ENCODE measurements at regions of chr11 and their contacts with region 1.

Region 1: GRCh38 chr11:108135845-108136544 is 14.6 kb downstream of the ACAT1 start:
- DNase-seq: no peak
- H3K4me3 Mint-ChIP-seq: no peak overlapping the region
- H3K27ac Mint-ChIP-seq: peak overlapping the region; percentile 79
- H3K4me1 Mint-ChIP-seq: peaks cover 20% of the 10 kb centered on the region
- H3K27me3 Mint-ChIP-seq: no peaks in the 10 kb centered on the region

Region 2: GRCh38 chr11:108115500-108116140 is 20.4 kb before region 1 on chr11:
- intact Hi-C with region 1: no loop called
- DNase-seq: no peak
- H3K4me3 Mint-ChIP-seq: no peak overlapping the region
- H3K27ac Mint-ChIP-seq: no peak overlapping the region
- H3K4me1 Mint-ChIP-seq: peaks cover 3% of the 10 kb centered on the region
- H3K27me3 Mint-ChIP-seq: no peaks in the 10 kb centered on the region

Region 3: DNA sequence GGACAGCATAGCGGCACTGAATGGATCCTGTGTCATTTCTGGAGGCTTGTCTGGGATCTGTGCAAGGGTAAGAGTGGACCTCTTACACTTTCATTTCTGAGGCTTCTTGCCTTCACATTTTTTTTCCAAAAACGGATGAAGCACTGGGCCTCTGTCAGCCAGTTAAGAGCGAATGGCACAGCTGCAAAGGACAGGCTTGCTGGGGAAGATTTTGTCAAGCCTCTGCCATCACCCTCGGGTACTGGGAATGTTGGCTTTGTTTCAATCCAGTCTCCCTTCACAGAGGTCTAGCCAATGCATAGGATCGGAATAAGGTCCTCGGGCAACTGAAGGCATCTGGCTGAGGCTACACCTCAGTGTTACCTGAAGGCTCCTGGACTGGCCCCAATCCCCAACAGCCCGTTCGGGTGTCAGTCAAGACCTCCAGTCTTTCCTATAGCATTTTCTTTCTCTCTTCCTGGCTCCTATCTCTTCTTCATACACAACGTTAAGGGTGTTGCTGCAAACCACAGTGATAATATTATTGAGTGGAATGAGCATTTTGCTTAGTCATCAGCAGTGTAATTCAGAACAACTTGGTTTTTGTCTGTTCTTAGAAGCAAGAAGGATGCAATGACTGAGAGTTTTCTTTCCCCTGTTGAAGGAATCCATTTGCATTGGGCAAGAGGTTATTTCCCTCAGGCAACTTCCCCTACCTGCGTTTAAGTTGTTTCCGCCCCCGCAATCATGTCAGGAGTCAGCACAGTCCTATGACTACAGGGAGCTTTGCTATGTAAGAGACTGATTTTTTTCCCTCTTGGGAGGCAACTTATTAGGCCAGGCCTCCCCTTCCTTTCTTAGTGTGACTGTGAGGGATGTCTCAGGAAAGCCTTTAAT is 63.7 kb after region 1 on chr11:
- intact Hi-C with region 1: loop called (anchors 5 kb)
- DNase-seq: no peak
- H3K4me3 Mint-ChIP-seq: no peak overlapping the region
- H3K27ac Mint-ChIP-seq: peak overlapping the region; percentile 73
- H3K4me1 Mint-ChIP-seq: peaks cover 42% of the 10 kb centered on the region
- H3K27me3 Mint-ChIP-seq: no peaks in the 10 kb centered on the region

Region 4: GRCh38 chr11:108647701-108648527 is 511.9 kb after region 1 on chr11:
- intact Hi-C with region 1: loop called (anchors 2 kb)
- DNase-seq: peak; percentile 39
- H3K4me3 Mint-ChIP-seq: no peak overlapping the region
- H3K27ac Mint-ChIP-seq: no peak overlapping the region
- H3K4me1 Mint-ChIP-seq: no peaks in the 10 kb centered on the region
- H3K27me3 Mint-ChIP-seq: peaks cover 7% of the 10 kb centered on the region

Measured in activated T-helper 2 cell treated with anti-CD3 and anti-CD28 coated beads, Interferon-gamma antibody, Interleukin-2, Interleukin-4, amounts not matched to agents 10 μg/mL and 5 μg/mL and 100 μg/mL, durations not matched to agents 14 hours and 24 hours and 36 hours (primary cell).